Heart right ventricle (tissue), 16 donors: ENCODE measurements at regions of chr7 and their contacts with region 1.

Region 1: DNA sequence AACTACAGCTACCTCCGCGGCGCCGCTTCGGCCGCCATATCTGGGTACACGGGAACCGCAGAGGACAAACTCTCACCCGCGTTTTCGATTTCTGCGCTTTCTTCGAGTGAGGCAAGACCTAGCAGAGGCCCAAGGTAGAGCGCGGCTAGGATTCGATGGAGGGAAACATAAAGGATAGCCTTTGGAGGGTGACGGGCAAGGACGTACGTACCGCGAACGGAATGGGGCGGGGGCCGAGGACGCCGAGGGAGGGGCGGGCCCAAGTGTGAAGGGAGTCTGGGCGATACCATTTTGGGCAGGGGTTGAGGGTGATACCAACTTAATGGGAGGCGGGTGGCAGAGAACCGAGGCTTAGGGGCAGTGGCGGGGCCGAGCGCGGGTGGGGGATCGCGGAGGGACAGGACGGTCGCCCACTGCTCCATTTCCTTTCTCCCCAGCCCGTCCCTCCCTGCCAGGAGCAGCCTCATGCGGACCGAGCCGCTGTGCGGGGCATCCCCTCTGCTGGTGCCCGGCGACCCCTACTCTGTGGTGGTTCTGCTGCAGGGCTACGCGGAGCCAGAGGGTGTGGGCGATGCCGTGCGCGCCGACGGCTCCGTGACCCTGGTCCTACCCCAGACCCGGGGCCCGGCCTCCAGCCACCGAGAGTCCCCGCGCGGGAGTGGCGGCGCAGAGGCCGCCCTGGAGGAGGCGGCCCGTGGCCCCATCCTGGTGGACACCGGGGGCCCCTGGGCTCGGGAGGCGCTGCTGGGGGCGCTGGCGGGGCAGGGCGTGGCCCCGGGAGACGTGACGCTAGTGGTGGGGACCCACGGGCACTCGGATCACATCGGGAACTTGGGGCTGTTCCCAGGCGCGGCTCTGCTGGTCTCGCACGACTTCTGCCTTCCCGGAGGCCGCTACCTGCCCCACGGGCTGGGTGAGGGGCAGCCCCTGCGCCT is at the start of gene MBLAC1:
- DNase-seq: peak; percentile 85 to 93
- ATAC-seq: peak; percentile 92 to 97 (median 96)
- H3K4me3 ChIP-seq: peak within 1 kb of the TSS; percentile 81 to 98 (median 94)
- H3K27ac ChIP-seq: peak within 1 kb of the TSS; percentile 82 to 98 (median 96)
- H3K4me1 ChIP-seq: peaks cover 11 to 43% (median 22%) of the 10 kb centered on the region in 9 donors
- H3K27me3 ChIP-seq: no peaks in the 10 kb centered on the region
- CTCF ChIP-seq: peak in 1 of 9 donors; percentile 3
- total RNA-seq, gene MBLAC1: 1.2 to 3.5 (median 2.0) TPM

Region 2: DNA sequence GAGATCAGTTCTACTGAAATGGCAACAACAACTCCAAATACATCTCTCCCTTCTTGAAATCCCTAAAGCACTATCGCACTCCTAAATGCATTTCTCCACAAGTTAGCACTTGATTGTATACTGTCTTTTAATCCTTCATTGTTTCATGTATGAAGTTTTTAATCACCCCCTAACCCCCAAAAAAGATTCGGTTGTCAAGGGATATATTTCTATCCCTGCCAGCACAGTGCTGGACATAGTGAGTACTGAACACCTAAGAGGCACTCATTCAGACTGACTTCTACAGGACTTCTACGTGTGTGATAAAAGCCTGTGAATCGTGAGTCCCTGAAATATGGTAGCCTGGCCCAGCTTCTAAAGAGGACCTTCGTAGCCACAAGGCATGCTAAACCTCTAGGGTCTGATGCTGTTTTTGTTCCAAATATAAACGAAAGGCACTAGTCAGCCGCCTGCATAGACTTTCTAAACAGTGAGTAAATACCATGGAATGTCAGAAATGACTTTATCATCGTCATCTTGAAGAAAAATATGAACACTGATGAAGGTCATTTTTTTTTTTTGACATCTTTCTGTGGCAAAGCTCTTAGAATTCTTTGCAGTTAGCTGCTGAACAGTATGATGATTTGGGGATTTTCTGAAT is 92.2 kb before region 1 on chr7:
- intact Hi-C with region 1: no loop called
- DNase-seq: no peak
- ATAC-seq: no peak
- H3K4me3 ChIP-seq: no peak overlapping the region
- H3K27ac ChIP-seq: no peak overlapping the region
- H3K4me1 ChIP-seq: peaks cover 0 to 4% (median 0%) of the 10 kb centered on the region in 9 donors
- H3K27me3 ChIP-seq: no peaks in the 10 kb centered on the region
- CTCF ChIP-seq: no peak

Region 3: DNA sequence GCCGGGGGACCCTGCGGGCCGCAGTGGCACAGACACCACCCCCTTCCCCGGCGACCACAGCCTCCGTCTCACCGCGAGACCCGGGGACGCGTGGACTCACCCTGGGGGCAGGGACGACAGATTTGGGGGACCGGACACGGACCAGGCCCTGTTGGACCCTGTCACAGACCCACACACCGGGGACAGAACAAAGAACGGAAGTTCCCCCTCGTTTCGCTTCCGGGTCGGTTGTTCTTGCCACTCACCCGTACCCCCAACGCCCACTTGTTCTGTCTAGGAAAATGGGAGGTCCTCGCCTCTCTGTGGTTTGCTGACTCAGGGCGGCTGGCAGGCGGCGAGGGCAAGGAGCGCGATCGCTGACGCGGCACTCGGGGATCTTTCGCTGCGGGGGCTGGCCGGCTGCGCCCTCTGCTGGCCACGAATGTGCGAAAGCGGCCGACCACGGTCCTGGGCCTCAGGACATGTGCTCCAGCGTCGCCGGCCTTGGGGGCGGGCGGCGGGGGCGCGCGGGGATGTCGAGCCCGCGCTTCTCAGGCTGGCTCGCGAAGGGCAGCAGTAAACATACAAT is 45.6 kb before region 1 on chr7 and contains the start of gene ZNF3:
- intact Hi-C with region 1: loop called in 3 of 10 experiments (anchors 2 to 5 kb)
- DNase-seq: peak; percentile 98 to 99
- ATAC-seq: peak; percentile 96 to 98 (median 96)
- H3K4me3 ChIP-seq: peak within 1 kb of the TSS; percentile 71 to 99 (median 90)
- H3K27ac ChIP-seq: peak within 1 kb of the TSS; percentile 65 to 96 (median 89)
- H3K4me1 ChIP-seq: peaks cover 7 to 42% (median 35%) of the 10 kb centered on the region in 9 donors
- H3K27me3 ChIP-seq: no peaks in the 10 kb centered on the region
- CTCF ChIP-seq: peak; percentile 85 to 99 (median 95)
- total RNA-seq, gene ZNF3: 14.1 to 17.8 (median 15.3) TPM

Region 4: GRCh38 chr7:100088621-100089457 is 38.4 kb before region 1 on chr7 and contains the start of gene COPS6:
- intact Hi-C with region 1: loop called in 1 of 10 experiments (anchors 5 kb)
- DNase-seq: peak; percentile 88 to 89
- ATAC-seq: peak; percentile 84 to 89 (median 87)
- H3K4me3 ChIP-seq: peak within 1 kb of the TSS; percentile 43 to 96 (median 84)
- H3K27ac ChIP-seq: peak within 1 kb of the TSS; percentile 42 to 98 (median 93)
- H3K4me1 ChIP-seq: peaks cover 5 to 42% (median 21%) of the 10 kb centered on the region in 9 donors
- H3K27me3 ChIP-seq: no peaks in the 10 kb centered on the region
- CTCF ChIP-seq: no peak
- total RNA-seq, gene COPS6: 106 to 130 (median 113) TPM